GM23248 (cell line): ENCODE measurements at regions of chr4 and their contacts with region 1.

Region 1: GRCh38 chr4:155953151-155954114 is at the start of gene CTSO:
- DNase-seq: peak; percentile 84
- H3K4me3 ChIP-seq: peak within 1 kb of the TSS; percentile 80
- H3K27ac ChIP-seq: peak within 1 kb of the TSS; percentile 95
- H3K4me1 ChIP-seq: peaks cover 12% of the 10 kb centered on the region
- H3K27me3 ChIP-seq: no peaks in the 10 kb centered on the region
- total RNA-seq, gene CTSO: 11.2 and 15.2 TPM in 2 replicates

Region 2: GRCh38 chr4:155491336-155492120 is 461.9 kb before region 1 on chr4:
- in situ Hi-C with region 1: no loop called
- DNase-seq: no peak
- H3K4me3 ChIP-seq: no peak overlapping the region
- H3K27ac ChIP-seq: no peak overlapping the region
- H3K4me1 ChIP-seq: no peaks in the 10 kb centered on the region
- H3K27me3 ChIP-seq: no peaks in the 10 kb centered on the region

Region 3: DNA sequence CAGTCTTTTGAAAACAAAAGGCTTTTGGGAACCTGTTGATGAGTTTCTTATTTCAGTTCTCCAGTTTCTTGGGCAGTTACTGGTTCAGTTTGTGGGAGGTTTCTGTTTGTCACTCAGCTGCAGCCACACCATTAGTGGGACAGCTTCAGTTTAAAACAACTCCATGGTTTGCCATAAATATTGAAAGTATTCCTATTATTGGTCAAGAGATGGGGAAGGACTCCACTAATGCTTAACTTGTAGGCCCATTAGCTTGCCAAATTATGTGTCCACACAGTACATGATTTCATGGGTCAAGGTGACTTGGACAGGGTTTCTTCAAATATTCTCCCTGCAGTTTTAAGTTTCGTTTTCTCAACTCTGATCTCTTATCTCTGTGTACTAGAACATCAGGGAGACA is 71.9 kb before region 1 on chr4:
- in situ Hi-C with region 1: no loop called
- DNase-seq: no peak
- H3K4me3 ChIP-seq: no peak overlapping the region
- H3K27ac ChIP-seq: no peak overlapping the region
- H3K4me1 ChIP-seq: no peaks in the 10 kb centered on the region
- H3K27me3 ChIP-seq: no peaks in the 10 kb centered on the region

Region 4: DNA sequence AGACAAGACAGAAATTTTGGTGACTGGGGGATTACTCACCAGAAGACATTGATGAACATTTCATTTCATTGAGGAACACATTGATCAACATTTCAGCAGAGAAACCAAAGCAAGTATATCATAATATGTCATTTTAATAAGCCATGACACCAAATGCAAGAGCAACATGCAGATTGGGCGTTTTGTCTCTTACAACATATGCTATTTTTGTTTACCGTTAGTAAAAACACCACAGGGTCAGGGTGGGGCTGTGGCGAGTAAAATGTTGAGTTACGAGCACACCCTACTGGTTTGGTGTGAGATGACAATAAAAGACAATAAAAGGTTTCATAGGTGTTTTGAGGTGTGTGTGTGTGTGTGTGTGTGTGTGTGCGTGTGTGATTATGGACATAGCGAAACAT is 723.7 kb after region 1 on chr4:
- in situ Hi-C with region 1: loop called (anchors 25 kb)
- DNase-seq: peak; percentile 71
- H3K4me3 ChIP-seq: no peak overlapping the region
- H3K27ac ChIP-seq: peak overlapping the region; percentile 7
- H3K4me1 ChIP-seq: peaks cover 41% of the 10 kb centered on the region
- H3K27me3 ChIP-seq: no peaks in the 10 kb centered on the region

Region 5: DNA sequence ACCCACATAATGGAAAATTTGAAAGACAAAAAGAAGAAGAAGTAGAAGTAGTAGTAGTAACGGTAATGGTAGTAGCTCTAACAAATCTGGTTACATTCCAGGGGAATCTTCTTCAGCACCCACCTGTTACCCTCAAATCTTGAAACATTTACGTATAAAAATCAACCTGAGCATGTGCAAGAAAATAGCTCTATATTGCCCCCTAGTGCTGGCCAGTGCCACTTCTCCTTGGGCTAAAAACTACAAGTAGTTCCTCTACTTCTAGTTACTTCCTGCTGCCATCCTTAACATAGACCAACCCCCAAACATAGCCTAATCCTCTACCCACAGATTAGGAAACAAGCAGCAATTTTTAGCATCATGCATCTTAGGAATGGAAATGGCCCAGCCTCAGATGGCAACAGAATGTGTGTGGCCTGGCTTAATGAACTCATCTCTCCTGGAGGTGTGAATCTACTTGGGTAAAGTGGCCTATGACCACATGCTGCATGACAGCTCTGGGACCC is 1015.1 kb after region 1 on chr4:
- in situ Hi-C with region 1: loop called (anchors 25 kb)
- DNase-seq: peak; percentile 81
- H3K4me3 ChIP-seq: peak overlapping the region; percentile 90
- H3K27ac ChIP-seq: no peak overlapping the region
- H3K4me1 ChIP-seq: peaks cover 35% of the 10 kb centered on the region
- H3K27me3 ChIP-seq: no peaks in the 10 kb centered on the region

Region 6: GRCh38 chr4:157128395-157128794 is 1175.0 kb after region 1 on chr4:
- in situ Hi-C with region 1: loop called (anchors 25 kb)
- DNase-seq: peak; percentile 60
- H3K4me3 ChIP-seq: no peak overlapping the region
- H3K27ac ChIP-seq: no peak overlapping the region
- H3K4me1 ChIP-seq: no peaks in the 10 kb centered on the region
- H3K27me3 ChIP-seq: no peaks in the 10 kb centered on the region